ENCODE measurements at regions of chrX and their contacts with region 1.

Region 1: DNA sequence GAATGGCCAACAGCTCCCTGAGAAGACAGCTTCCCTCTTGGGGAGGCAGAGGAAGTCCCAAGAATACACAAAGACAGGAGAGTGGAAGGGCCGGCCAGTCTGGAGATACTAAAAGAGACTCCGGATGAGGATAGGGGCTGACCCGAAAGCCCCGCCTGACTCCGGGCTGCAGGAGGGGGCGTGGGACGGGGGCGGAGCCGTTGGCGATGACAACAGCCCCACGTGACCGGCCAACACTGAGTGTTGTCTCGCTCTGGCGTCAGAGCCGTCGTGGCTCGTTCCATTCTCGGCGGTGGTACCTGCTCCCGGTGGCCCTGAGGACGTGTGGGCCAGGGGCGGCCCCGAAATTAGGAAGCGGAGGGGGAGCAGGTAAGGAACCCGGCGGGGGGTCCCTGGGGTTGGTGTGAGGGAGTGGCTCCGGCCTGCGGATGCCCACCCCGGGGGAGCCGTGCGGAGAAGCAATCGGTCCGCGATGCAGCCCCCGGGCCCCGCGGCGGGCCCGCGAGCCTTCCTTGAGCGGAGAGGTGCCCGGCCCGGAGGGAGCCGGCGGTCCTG is at the start of gene BEX4:
- DNase-seq: peak; percentile 94
- H3K4me3 ChIP-seq: peak within 1 kb of the TSS; percentile 75 to 83 (median 78)
- H3K27ac ChIP-seq: peak within 1 kb of the TSS; percentile 86 to 92 (median 87)
- H3K4me1 ChIP-seq: peaks cover 0 to 8% (median 3%) of the 10 kb centered on the region in 4 donors
- H3K27me3 ChIP-seq: no peaks in the 10 kb centered on the region
- CTCF ChIP-seq: no peak
- EP300 ChIP-seq: no peak
- POLR2A ChIP-seq: peak; percentile 70
- total RNA-seq, gene BEX4: 31.1 to 66.8 (median 49.0) TPM

Region 2: GRCh38 chrX:103101280-103102042 is 113.5 kb before region 1 on chrX:
- intact Hi-C with region 1: no loop called
- DNase-seq: no peak
- H3K4me3 ChIP-seq: no peak overlapping the region
- H3K27ac ChIP-seq: no peak overlapping the region
- H3K4me1 ChIP-seq: no peaks in the 10 kb centered on the region
- H3K27me3 ChIP-seq: no peaks in the 10 kb centered on the region
- CTCF ChIP-seq: no peak
- EP300 ChIP-seq: no peak
- POLR2A ChIP-seq: no peak

Region 3: DNA sequence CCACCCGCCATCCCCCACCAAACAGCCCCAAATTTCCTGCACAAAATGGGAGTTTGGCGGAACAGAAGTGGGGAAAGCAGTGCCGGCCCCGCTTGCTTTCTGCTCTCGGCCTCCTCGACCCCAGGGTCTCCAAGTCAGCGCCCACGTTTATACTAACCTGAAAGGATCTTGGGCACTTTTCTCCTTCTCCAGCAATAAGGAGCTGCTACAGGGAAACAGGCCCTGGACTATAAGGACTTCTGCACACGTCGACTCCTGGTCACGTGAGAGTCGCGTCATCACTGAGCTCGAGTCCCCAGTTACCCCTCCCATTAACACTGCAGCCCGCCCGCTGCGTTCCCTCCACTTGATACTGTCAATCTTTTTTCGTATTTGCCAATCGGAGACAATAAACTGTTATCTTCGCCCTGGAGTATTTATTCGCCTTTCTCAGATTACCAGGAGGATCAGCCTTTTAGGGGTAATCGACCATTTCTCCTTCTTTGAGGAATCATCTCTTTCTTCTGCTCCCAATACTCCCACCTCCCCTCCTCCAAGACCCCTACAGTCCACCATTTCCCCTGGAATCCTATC is 40.1 kb after region 1 on chrX and contains the start of gene TCEAL8:
- intact Hi-C with region 1: loop called (anchors 5 kb)
- DNase-seq: peak; percentile 93
- H3K4me3 ChIP-seq: peak within 1 kb of the TSS; percentile 57 to 67 (median 63)
- H3K27ac ChIP-seq: peak within 1 kb of the TSS; percentile 85 to 89 (median 88)
- H3K4me1 ChIP-seq: peaks cover 0 to 11% (median 3%) of the 10 kb centered on the region in 4 donors
- H3K27me3 ChIP-seq: no peaks in the 10 kb centered on the region
- CTCF ChIP-seq: no peak
- EP300 ChIP-seq: no peak
- POLR2A ChIP-seq: peak; percentile 24
- total RNA-seq, gene TCEAL8: 49.7 to 56.9 (median 54.2) TPM

Measured in esophagus muscularis mucosa (tissue), 4 donors.